Activated naive CD4-positive, alpha-beta T cell treated with anti-CD3 and anti-CD28 coated beads for 36 hours (primary cell): ENCODE measurements at regions of chr12 and their contacts with region 1.

Region 1: DNA sequence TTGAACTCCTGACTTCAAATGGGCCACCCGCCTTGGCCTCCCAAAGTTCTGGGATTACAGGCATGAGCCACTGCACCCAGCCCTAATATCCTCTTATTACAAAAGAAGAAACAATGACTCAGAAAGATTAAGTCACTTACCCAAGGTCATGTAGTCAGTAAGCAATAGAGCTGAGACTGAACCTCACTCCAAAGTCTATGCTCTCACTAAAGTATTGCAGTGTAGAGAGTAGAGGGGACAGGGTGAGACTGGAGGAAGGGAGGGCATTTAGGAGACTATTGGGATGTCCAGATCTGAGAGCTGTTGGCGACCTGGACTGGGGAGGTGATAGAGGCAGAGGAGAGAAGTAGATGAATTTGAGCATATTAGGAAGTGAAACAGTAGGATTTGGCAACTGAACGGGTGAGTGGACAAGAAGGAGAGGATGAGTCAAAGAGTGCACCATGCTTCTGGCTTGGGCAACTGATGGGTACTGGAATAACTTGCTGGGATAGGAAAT is 11.8 kb downstream of the P2RX7 start:
- DNase-seq: peak; percentile 48
- H3K4me3 Mint-ChIP-seq: no peak overlapping the region
- H3K27ac Mint-ChIP-seq: peak overlapping the region; percentile 77
- H3K4me1 Mint-ChIP-seq: peaks cover 29% of the 10 kb centered on the region
- H3K27me3 Mint-ChIP-seq: no peaks in the 10 kb centered on the region

Region 2: DNA sequence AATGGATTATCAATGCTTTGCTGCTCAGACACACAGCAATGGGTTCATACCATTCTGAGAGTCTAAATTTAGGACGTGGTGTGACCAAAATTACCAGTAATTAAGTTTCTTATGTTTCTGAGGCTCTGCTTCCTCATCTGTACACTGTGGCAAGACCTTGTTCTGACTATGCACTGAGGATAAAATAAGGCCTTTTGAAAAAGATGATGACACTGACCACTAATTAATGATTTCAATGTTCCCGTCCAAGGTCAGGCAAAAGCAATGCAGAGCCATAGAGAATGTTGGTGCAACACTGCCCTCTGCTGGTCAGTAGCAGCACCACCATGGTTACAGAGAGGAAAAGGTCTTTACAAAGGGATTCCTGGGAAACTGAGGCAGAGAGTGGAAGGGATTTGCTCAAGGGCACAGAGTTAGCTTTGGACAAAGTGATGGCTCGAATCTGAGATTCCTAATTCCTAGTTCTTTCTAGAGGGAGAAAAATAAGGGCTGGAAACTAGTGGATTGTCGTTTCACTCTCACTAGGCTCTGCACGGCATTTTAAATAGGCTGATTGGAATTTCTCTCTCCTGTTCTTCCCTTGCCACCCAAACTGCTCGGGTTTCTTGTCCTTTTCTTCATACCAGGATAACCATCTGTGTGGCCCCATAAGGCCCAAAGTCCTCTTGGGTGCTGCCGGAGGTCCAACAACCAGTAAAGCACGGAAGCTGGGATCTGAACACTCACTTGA is 34.1 kb before region 1 on chr12:
- CTCF ChIA-PET with region 1: no interaction called
- intact Hi-C with region 1: no loop called
- DNase-seq: peak; percentile 80
- H3K4me3 Mint-ChIP-seq: no peak overlapping the region
- H3K27ac Mint-ChIP-seq: no peak overlapping the region
- H3K4me1 Mint-ChIP-seq: peaks cover 4% of the 10 kb centered on the region
- H3K27me3 Mint-ChIP-seq: no peaks in the 10 kb centered on the region

Region 3: DNA sequence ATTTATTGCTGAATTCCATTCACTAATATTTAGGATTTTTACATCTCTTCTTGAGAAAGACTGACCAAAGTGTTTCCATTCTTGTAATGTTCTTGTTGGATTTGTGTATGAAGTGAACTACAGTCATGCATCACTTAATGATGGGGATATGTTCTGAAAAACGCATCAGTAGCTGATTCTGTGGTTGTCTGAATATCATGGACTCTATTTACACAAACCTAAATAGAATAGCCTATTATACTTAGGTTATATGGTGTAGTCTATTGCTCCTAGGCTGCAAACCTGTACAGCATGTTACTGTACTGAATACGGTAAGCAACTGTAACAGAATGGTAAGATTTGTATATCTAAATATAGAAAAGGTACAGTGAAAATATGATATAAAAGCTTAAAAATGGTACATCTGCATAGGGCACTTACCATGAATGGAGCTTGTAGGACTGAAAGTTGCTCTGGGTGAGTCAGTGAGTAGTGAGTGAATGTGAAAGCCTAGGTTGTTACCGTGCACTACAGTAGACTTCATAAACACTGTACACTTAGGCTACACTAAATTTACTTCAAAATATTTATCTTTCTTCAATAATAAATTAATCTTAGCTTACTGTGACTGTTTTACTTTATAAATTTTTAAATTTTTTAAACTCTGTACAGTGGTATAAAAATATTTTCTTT is 37.9 kb after region 1 on chr12:
- CTCF ChIA-PET with region 1: no interaction called
- intact Hi-C with region 1: loop called (anchors 2 kb)
- DNase-seq: peak; percentile 42
- H3K4me3 Mint-ChIP-seq: no peak overlapping the region
- H3K27ac Mint-ChIP-seq: no peak overlapping the region
- H3K4me1 Mint-ChIP-seq: peaks cover 4% of the 10 kb centered on the region
- H3K27me3 Mint-ChIP-seq: no peaks in the 10 kb centered on the region

Region 4: GRCh38 chr12:121209624-121210572 is 65.4 kb after region 1 on chr12 and contains the start of gene P2RX4:
- CTCF ChIA-PET with region 1: interaction called, 4 read pairs
- intact Hi-C with region 1: loop called (anchors 1 kb)
- DNase-seq: peak; percentile 91
- H3K4me3 Mint-ChIP-seq: peak within 1 kb of the TSS; percentile 81
- H3K27ac Mint-ChIP-seq: peak within 1 kb of the TSS; percentile 89
- H3K4me1 Mint-ChIP-seq: peaks cover 23% of the 10 kb centered on the region
- H3K27me3 Mint-ChIP-seq: no peaks in the 10 kb centered on the region
- total RNA-seq, gene P2RX4: 14.2 to 18.0 TPM